ENCODE measurements at regions of chr2 and their contacts with region 1.

Region 1: GRCh38 chr2:53708988-53709387 is 58.6 kb upstream of the CHAC2 start:
- DNase-seq: no peak
- H3K4me3 Mint-ChIP-seq: no peak overlapping the region
- H3K27ac Mint-ChIP-seq: no peak overlapping the region
- H3K4me1 Mint-ChIP-seq: no peaks in the 10 kb centered on the region
- H3K27me3 Mint-ChIP-seq: no peaks in the 10 kb centered on the region
- CTCF ChIP-seq: no peak

Region 2: DNA sequence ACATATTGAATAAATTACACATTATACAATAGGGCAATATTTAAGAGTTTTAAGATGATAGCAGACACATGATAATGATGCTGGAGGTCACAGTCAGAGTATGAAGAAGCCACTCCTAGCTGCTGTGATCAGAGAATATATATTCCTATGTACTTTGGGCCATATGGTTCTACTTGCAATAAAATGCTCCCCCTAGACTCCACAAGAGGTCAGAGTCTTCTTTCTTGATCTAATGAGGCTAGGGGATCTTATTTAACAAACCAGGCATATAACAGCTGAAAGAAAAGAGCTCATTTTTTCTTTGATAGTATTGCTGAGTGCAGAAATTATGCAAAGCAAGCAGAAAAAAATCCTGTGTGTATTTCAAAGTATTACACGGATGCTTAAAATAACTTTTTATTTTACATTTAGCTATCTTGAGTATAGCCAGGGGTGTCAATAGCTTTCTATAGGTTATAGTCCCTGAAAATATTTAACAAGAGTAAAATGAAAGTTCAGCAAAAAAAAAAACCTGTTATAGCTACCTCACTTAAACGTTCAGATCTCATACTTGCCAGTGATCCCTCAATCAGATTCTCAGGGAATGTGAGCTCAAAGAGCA is 690.1 kb before region 1 on chr2:
- CTCF ChIA-PET with region 1: no interaction called
- POLR2A ChIA-PET with region 1: no interaction called
- intact Hi-C with region 1: loop called (anchors 5 kb)
- DNase-seq: peak; percentile 20
- H3K4me3 Mint-ChIP-seq: no peak overlapping the region
- H3K27ac Mint-ChIP-seq: no peak overlapping the region
- H3K4me1 Mint-ChIP-seq: no peaks in the 10 kb centered on the region
- H3K27me3 Mint-ChIP-seq: no peaks in the 10 kb centered on the region
- CTCF ChIP-seq: peak; percentile 18

Region 3: GRCh38 chr2:53252115-53252514 is 456.9 kb before region 1 on chr2:
- CTCF ChIA-PET with region 1: no interaction called
- POLR2A ChIA-PET with region 1: no interaction called
- intact Hi-C with region 1: no loop called
- DNase-seq: no peak
- H3K4me3 Mint-ChIP-seq: no peak overlapping the region
- H3K27ac Mint-ChIP-seq: no peak overlapping the region
- H3K4me1 Mint-ChIP-seq: no peaks in the 10 kb centered on the region
- H3K27me3 Mint-ChIP-seq: no peaks in the 10 kb centered on the region
- CTCF ChIP-seq: no peak